ENCODE measurements at regions of chr3 and their contacts with region 1.

Region 1: DNA sequence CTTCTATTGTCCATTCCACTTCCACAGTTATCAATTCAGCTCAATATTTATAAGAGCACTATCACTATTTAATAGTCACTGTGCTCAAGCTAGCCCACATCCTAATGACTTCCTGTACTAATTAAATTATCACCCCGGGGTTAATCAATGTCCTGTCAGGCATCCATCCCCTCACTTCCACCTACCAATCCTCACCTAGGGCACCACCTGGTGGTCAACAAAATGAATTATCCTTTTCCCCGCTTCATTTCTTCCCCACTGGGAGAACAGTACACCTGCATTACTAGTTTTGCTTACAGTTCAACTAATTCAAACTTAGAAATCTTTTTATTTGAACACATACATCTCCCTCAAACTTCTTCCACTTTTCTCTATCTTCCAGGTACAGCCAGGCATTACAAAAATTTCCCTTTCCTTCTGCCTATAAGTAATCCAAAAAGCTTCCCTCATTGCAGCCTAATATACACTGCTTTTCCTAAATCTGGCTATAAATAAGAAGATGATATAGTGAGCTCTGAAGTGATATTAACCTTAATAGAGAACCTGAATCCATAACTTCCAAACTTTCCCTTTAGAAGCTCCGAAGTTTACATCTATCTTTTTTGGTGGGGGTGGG is 68.5 kb downstream of the TMCC1 start:
- DNase-seq: peak in 2 of 10 donors; percentile 25 to 38
- H3K4me3 ChIP-seq: no peak overlapping the region
- H3K27ac ChIP-seq: no peak overlapping the region
- H3K27me3 ChIP-seq: no peaks in the 10 kb centered on the region
- CTCF ChIP-seq: peak; percentile 64 to 92 (median 80)

Region 2: GRCh38 chr3:129490242-129491045 is 334.6 kb before region 1 on chr3:
- intact Hi-C with region 1: loop called (anchors 5 kb)
- DNase-seq: peak; percentile 66 to 94 (median 88)
- H3K4me3 ChIP-seq: peak overlapping the region in 23 of 59 donors; percentile 1 to 38 (median 22)
- H3K27ac ChIP-seq: peak overlapping the region; percentile 23 to 97 (median 89)
- H3K27me3 ChIP-seq: no peaks in the 10 kb centered on the region
- CTCF ChIP-seq: peak; percentile 77 to 99 (median 94)

Region 3: DNA sequence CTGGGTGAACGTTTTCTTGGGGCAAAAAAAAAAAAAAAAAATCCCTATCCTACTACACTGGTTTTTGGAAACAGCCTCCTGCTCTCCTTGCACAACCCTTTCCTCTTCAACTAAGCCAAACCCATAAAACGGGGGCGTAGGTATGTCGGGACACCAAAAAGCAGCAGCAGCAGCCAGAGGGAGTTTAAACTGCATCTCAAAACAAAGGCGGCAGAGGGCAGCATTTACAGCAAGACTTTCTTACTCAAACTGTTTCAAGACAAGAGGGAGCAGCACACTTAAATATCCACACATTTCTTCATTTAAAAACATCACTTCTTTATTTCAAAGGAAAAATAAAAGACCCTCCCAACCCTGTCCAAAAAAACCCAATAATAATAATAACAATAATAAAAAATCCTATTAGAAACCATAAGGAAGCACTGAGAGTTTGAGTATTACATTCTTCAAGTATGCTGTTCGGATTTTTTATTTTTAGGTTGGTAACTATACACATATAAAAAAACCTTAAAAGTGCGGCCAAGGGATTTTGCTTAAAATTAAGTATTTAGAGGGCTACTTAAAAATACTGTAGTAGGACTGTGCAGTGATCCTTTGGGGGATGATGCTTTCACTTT is 174.7 kb before region 1 on chr3:
- intact Hi-C with region 1: loop called (anchors 1 to 2 kb)
- DNase-seq: peak in 9 of 10 donors; percentile 53 to 89 (median 63)
- H3K4me3 ChIP-seq: no peak overlapping the region
- H3K27ac ChIP-seq: peak overlapping the region in 16 of 59 donors; percentile 0 to 76 (median 50)
- H3K27me3 ChIP-seq: no peaks in the 10 kb centered on the region
- CTCF ChIP-seq: peak; percentile 27 to 95 (median 83)

Region 4: DNA sequence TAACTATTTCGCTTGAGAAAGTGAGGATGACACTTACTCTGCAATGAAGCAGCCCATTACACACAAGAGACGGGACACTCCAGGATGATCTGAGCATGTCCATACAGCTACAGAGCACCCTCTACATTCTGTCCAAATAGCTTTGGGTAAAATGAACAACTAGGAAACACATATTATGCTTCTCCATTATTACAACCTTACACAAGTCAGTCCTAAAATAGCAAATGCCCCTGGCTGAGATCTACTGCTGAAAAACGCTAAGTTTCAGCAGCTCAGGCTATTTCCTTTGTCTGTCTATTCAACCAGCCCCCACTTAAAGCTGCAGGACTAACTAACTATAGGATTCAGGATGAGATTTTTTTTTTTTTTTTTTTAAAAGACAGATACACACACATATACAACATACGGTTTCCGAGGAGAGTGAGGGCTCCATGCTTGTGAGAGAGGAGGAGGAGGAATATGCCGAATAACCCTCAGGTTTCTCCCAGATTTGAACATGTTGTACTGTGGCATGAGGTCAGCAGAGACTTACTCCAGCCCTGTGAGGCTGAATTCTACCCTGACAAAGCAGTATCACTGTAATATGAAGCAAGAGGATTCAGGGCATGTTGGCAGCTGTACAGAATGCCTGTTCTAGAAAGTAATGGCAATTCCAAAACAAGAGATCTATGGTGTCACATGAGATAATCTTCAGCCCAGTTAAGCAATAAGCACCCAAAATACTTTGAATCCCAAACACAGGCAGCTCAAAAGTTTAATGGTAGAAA is 101.3 kb before region 1 on chr3:
- intact Hi-C with region 1: loop called in 1 of 2 experiments (anchors 10 kb)
- DNase-seq: no peak
- H3K4me3 ChIP-seq: peak overlapping the region in 9 of 59 donors; percentile 6 to 37 (median 16)
- H3K27ac ChIP-seq: peak overlapping the region in 34 of 59 donors; percentile 1 to 70 (median 30)
- H3K27me3 ChIP-seq: no peaks in the 10 kb centered on the region
- CTCF ChIP-seq: no peak

Region 5: DNA sequence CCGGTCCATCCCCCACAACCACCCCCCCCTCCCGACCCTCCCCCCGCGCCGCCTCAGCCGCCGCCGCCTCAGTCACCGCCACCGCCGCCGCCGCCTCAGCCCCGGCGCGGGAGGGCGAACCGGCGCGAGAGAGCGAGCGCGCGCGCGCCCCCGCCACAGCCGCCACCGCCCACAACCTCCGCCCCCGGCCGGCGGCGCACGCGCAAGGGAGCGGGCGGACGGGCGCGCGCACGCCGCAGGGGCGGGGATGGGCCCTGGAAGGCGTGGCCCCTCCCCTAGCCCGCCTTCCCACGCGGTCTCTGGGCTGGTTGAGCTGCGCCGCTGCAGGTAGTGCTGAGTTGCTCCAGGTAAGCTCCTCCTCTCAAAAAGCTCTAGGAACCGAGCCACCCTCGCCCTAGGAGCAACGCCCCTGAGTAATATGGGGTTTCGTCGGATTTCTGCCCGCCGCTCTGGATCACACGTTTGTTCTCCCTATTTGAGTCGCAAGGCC is 68.6 kb after region 1 on chr3 and contains the start of gene TMCC1:
- intact Hi-C with region 1: loop called in 1 of 2 experiments (anchors 10 kb)
- DNase-seq: peak; percentile 61 to 90 (median 81)
- H3K4me3 ChIP-seq: peak within 1 kb of the TSS; percentile 65 to 99 (median 89)
- H3K27ac ChIP-seq: peak within 1 kb of the TSS; percentile 63 to 96 (median 92)
- H3K27me3 ChIP-seq: no peaks in the 10 kb centered on the region
- CTCF ChIP-seq: peak in 5 of 56 donors; percentile 2 to 25 (median 12)
- total RNA-seq, gene TMCC1: 64.8 to 161 (median 84.3) TPM

Region 6: GRCh38 chr3:129934234-129935123 is 109.4 kb after region 1 on chr3:
- intact Hi-C with region 1: loop called (anchors 2 to 5 kb)
- DNase-seq: peak in 5 of 10 donors; percentile 28 to 64 (median 39)
- H3K4me3 ChIP-seq: peak overlapping the region in 47 of 59 donors; percentile 4 to 56 (median 35)
- H3K27ac ChIP-seq: peak overlapping the region in 1 of 59 donors; percentile 3
- H3K27me3 ChIP-seq: no peaks in the 10 kb centered on the region
- CTCF ChIP-seq: peak; percentile 83 to 98 (median 95)

Region 7: DNA sequence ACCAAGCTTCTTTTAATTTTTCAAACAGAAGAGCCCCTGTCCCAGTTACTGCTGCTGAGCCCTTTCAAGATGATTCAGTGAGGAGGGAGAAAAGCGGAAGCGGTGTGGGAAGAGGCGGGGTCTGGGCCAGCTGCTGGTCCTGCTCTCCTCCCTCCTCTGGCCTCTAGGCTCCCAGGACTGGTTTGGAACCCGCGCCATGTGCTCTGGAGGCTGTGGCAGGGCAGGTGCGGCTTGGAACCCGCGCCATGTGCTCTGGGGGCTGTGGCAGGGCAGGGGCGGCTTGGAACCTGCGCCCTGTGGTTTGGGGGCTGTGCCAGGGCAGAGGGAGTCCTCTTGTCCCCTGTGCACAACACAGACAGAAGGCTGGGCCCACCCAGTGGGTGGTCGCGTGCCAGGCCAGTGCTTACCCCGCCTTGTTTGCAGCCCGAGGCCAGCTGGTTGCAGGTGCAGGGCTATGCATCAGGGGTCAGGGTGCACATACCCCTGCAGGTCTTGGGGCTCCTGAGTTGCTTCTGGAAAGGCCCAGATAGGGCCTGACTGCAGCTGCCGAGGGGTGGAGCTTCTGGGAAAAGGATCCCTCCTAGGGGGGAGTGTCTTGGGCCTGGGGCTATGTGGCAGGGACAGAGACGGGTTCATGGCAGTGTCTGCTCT is 268.8 kb after region 1 on chr3:
- intact Hi-C with region 1: loop called in 1 of 2 experiments (anchors 10 kb)
- DNase-seq: no peak
- H3K4me3 ChIP-seq: no peak overlapping the region
- H3K27ac ChIP-seq: no peak overlapping the region
- H3K27me3 ChIP-seq: no peaks in the 10 kb centered on the region
- CTCF ChIP-seq: no peak